Activated CD4-positive, alpha-beta memory T cell treated with anti-CD3 and anti-CD28 coated beads for 36 hours (primary cell): ENCODE measurements at regions of chr20 and their contacts with region 1.

Region 1: DNA sequence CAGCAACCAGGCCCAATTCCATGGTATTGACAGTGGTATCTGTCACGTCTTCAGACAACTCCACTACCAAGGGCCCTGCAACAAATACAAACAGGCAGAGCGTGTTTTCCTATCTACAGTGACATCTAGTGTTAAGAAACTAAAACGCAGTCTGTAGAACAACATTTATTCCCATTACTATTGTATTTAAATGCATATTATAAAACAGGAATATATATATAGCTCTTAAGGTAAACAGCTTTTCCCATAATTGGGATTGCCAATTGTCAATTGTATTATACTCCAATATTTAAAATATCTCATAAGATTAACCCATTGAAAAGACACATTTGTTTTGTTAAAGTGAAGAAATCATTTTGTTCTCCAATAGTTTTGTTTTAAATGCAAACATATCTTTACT is 97.2 kb downstream of the KIF16B start:
- DNase-seq: no peak
- H3K4me3 Mint-ChIP-seq: no peak overlapping the region
- H3K27ac Mint-ChIP-seq: no peak overlapping the region
- H3K4me1 Mint-ChIP-seq: peaks cover 4% of the 10 kb centered on the region
- H3K27me3 Mint-ChIP-seq: no peaks in the 10 kb centered on the region

Region 2: GRCh38 chr20:15708984-15709598 is 766.9 kb before region 1 on chr20:
- CTCF ChIA-PET with region 1: interaction called, 7 read pairs
- POLR2A ChIA-PET with region 1: no interaction called
- intact Hi-C with region 1: loop called (anchors 5 kb)
- DNase-seq: peak; percentile 52
- H3K4me3 Mint-ChIP-seq: no peak overlapping the region
- H3K27ac Mint-ChIP-seq: no peak overlapping the region
- H3K4me1 Mint-ChIP-seq: no peaks in the 10 kb centered on the region
- H3K27me3 Mint-ChIP-seq: no peaks in the 10 kb centered on the region

Region 3: DNA sequence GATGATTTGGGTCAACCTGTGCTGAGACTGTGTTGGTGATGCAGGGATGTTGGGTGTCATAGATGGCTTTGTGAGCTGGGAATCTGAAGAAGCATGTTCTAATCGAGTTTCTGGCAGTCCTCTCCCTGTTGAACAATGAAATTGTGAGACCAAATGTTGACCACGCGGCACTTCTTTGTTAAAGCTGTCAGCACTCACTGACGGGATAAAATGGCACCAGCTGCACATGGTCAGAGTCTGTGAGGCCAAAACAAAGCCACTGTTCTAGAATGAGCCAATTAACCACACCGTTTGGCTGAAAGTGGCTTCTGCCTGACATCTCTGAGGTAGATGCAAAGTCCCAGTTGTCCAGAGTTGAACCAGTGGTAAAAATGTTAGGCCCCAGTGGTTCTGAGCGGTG is 465.0 kb before region 1 on chr20:
- CTCF ChIA-PET with region 1: no interaction called
- POLR2A ChIA-PET with region 1: no interaction called
- intact Hi-C with region 1: loop called (anchors 5 kb)
- DNase-seq: no peak
- H3K4me3 Mint-ChIP-seq: no peak overlapping the region
- H3K27ac Mint-ChIP-seq: no peak overlapping the region
- H3K4me1 Mint-ChIP-seq: no peaks in the 10 kb centered on the region
- H3K27me3 Mint-ChIP-seq: no peaks in the 10 kb centered on the region

Region 4: DNA sequence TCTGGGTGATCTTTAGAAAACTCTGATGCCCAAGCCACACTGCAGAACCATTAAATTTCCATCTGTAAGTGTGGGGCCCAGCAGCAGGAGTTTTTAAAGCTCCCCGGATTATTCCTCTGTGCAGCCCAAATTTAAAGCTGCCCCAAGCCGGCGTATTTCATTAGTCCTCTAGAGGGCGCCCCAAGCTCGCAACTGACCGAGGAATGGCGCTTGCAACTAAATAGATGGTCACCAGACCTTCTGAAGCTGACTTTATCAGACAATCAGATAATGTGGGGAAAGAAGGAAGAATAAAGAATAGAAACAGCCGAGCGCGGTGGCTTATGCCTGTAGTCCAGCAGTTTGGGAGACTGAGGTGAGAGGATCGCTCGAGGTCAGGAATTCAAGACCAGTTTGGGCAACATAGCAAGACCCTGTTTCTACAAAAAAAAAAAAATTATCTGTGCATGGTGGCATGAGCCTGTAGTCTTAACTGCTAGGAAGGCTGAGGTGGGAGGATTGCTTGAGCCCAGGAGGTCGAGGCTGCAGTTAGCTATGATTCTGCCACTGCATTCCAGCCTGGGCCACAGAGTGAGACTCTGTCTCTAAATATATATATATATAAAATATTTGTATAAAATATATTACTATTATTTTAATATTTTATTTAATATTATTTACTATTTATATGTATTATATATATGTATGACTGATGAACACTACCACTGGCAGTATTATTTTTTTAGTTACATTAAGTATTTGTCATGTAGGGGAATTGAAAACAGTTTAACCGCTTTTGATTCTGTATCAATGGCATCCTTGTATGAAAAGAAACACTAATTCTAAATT is 328.1 kb after region 1 on chr20:
- CTCF ChIA-PET with region 1: no interaction called
- POLR2A ChIA-PET with region 1: no interaction called
- intact Hi-C with region 1: no loop called
- DNase-seq: peak; percentile 68
- H3K4me3 Mint-ChIP-seq: no peak overlapping the region
- H3K27ac Mint-ChIP-seq: no peak overlapping the region
- H3K4me1 Mint-ChIP-seq: no peaks in the 10 kb centered on the region
- H3K27me3 Mint-ChIP-seq: peaks cover 30% of the 10 kb centered on the region